ENCODE measurements at regions of chr7 and their contacts with region 1.

Region 1: DNA sequence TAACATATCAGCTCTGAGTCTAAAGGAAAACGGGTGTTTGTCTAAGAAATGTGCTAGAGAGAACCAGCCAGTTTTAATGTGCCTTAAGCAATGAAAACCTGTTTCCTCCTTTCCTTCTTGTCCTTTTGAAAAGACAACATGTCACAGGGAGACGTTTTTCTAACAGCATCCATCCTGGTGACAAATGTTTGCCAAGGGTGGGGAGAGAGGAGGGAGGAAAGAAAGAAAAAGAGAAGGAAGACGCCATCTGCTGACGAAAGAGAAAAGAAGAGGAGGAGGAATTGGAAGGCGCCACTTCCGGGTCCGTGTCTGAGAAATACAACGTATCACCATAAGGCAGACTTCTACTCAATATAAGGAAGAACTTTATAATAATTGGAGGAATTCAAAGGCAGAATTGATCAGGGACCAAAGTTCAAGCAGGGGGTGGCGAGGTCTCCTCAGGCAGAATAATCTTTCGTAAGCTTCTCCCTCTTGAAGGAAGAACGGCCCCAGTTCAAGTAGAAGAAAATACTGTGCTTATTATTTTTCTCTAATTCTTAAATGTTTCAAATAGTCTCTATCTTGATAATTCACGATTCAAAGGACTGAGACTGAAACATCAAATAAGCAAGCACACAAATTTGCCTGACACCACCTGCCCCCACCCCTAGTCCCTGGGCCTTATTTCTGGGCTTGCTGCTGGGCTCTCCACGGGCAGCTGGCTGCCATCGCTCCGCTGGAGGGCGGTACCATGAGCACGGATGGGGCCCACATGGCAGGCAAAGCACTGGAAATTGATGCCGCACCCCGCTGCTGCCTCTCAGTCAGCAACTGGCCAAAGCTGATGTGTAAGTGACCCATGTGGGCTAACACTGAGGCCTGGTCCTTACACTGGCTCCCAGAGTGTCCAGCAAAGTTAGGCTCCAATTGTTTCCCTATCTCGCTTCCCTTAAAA is 273.7 kb upstream of the KLF14 start:
- DNase-seq: peak; percentile 79
- ATAC-seq: peak; percentile 24
- H3K4me3 Mint-ChIP-seq: peak overlapping the region; percentile 59
- H3K27ac Mint-ChIP-seq: peak overlapping the region; percentile 99
- H3K4me1 Mint-ChIP-seq: peaks cover 82% of the 10 kb centered on the region
- H3K27me3 Mint-ChIP-seq: no peaks in the 10 kb centered on the region
- CTCF ChIP-seq: peak; percentile 59

Region 2: DNA sequence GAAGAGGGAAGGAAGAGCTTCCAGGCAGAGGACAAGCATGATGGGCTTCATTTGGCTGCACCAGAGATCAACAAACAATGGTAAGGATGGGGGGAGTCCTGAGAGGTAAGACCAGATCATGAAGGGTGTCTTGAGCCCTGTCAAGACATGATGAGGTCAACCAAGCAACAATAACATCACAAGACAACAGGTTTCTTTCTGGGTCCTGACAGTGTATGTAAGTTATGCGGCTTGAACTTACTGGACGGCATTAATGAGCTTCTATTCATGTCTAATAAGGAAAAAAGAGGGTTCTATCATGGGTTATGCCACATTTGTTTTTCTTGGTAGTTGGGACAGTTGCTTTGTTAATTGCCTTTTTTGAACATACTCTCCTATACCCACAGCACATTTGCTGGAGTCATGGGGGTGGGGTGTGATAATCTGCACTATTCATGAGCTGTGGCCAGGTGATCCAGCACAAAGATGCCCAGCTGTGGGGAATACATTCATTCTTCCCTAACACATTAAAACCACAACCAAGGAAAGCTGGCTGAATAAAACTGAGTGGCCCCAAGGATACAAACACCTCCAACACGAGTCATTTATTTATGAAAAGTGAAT is 104.8 kb before region 1 on chr7:
- CTCF ChIA-PET with region 1: no interaction called
- POLR2A ChIA-PET with region 1: no interaction called
- intact Hi-C with region 1: no loop called
- DNase-seq: no peak
- ATAC-seq: no peak
- H3K4me3 Mint-ChIP-seq: no peak overlapping the region
- H3K27ac Mint-ChIP-seq: peak overlapping the region; percentile 85
- H3K4me1 Mint-ChIP-seq: peaks cover 87% of the 10 kb centered on the region
- H3K27me3 Mint-ChIP-seq: no peaks in the 10 kb centered on the region
- CTCF ChIP-seq: no peak

Region 3: DNA sequence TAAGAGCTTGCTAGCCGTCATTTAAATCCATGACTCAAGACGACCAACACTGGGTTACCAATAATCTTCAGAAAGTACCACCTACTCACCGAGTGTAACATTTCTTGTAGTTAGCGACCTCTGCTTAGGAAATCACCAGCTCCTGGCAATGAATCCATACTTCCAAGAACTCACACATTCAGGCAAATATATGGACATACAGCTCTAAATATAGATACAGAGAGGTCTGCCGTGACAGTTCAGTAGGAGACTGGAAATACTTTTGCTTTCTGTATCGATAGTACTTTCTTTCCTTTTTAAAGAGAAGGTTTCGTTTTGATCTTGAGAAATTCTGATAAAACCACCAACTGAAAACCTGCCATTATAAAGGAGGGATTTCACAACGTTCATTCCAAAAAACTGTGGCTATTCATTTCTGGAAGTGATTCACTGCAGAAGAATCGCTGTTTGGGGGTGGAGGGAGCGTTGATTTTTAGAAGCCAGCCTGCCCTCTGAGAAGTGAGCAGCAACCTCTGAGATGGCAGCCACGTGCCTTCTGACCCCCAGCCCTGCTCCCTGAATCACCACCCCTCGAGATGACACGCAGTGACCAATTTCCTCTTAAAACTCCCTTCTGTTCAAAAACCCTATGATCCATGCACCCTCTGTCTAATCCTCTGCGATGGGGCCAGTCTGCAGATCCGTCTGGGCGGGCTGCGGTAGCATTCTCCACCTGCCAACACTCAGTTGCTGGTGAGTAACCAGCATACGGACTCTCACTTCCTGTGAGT is 94.6 kb before region 1 on chr7:
- CTCF ChIA-PET with region 1: no interaction called
- POLR2A ChIA-PET with region 1: no interaction called
- intact Hi-C with region 1: loop called (anchors 5 kb)
- DNase-seq: peak; percentile 93
- ATAC-seq: peak; percentile 79
- H3K4me3 Mint-ChIP-seq: peak overlapping the region; percentile 87
- H3K27ac Mint-ChIP-seq: peak overlapping the region; percentile 97
- H3K4me1 Mint-ChIP-seq: peaks cover 85% of the 10 kb centered on the region
- H3K27me3 Mint-ChIP-seq: no peaks in the 10 kb centered on the region
- CTCF ChIP-seq: no peak

Region 4: GRCh38 chr7:130966246-130967009 is 41.2 kb before region 1 on chr7:
- CTCF ChIA-PET with region 1: interaction called, 10 read pairs
- POLR2A ChIA-PET with region 1: interaction called, 118 read pairs
- intact Hi-C with region 1: loop called (anchors 5 kb)
- DNase-seq: peak; percentile 53
- ATAC-seq: peak; percentile 18
- H3K4me3 Mint-ChIP-seq: peak overlapping the region; percentile 26
- H3K27ac Mint-ChIP-seq: peak overlapping the region; percentile 83
- H3K4me1 Mint-ChIP-seq: peaks cover 69% of the 10 kb centered on the region
- H3K27me3 Mint-ChIP-seq: no peaks in the 10 kb centered on the region
- CTCF ChIP-seq: no peak

Region 5: GRCh38 chr7:130996841-130997231 is 10.8 kb before region 1 on chr7:
- CTCF ChIA-PET with region 1: interaction called, 14 read pairs
- POLR2A ChIA-PET with region 1: interaction called, 8 read pairs
- intact Hi-C with region 1: no loop called
- DNase-seq: peak; percentile 69
- ATAC-seq: peak; percentile 82
- H3K4me3 Mint-ChIP-seq: peak overlapping the region; percentile 20
- H3K27ac Mint-ChIP-seq: peak overlapping the region; percentile 85
- H3K4me1 Mint-ChIP-seq: peaks cover 76% of the 10 kb centered on the region
- H3K27me3 Mint-ChIP-seq: no peaks in the 10 kb centered on the region
- CTCF ChIP-seq: no peak

Region 6: DNA sequence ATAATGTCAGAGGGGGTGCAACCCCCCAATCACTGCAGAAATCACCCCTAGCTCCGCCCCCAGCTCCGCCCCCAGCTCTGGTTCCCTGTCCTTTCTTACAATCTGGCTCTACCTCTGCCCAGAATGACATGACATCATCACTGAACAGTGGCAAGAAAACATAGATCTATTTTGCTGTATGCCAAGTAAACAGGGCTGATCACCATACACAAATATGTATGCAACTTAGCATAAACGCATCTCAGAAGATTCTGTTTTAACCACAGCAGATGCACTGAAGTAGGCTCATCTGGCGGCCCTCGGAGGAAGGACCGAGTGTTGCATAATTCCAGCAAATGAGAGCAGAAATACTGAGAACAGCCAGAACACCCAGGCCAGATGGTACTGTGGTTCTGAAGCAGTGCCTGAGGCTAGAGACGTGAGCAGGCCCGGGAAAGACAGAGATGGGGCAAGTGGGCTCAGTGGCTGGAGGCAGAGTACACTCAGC is 19.7 kb after region 1 on chr7:
- CTCF ChIA-PET with region 1: interaction called, 13 read pairs
- POLR2A ChIA-PET with region 1: interaction called, 12 read pairs
- intact Hi-C with region 1: loop called (anchors 2 kb)
- DNase-seq: peak; percentile 65
- ATAC-seq: peak; percentile 15
- H3K4me3 Mint-ChIP-seq: no peak overlapping the region
- H3K27ac Mint-ChIP-seq: peak overlapping the region; percentile 99
- H3K4me1 Mint-ChIP-seq: peaks cover 82% of the 10 kb centered on the region
- H3K27me3 Mint-ChIP-seq: no peaks in the 10 kb centered on the region
- CTCF ChIP-seq: no peak

Region 7: GRCh38 chr7:131040467-131040932 is 32.8 kb after region 1 on chr7:
- CTCF ChIA-PET with region 1: interaction called, 25 read pairs
- POLR2A ChIA-PET with region 1: interaction called, 5 read pairs
- intact Hi-C with region 1: no loop called
- DNase-seq: peak; percentile 75
- ATAC-seq: peak; percentile 84
- H3K4me3 Mint-ChIP-seq: peak overlapping the region; percentile 30
- H3K27ac Mint-ChIP-seq: peak overlapping the region; percentile 70
- H3K4me1 Mint-ChIP-seq: peaks cover 62% of the 10 kb centered on the region
- H3K27me3 Mint-ChIP-seq: no peaks in the 10 kb centered on the region
- CTCF ChIP-seq: peak; percentile 97